MCF 10A (cell line): ENCODE measurements at regions of chr4 and their contacts with region 1.

Region 1: GRCh38 chr4:81040012-81040659 is 9.6 kb downstream of the BMP3 start:
- DNase-seq: peak; percentile 60
- H3K4me3 Mint-ChIP-seq: no peak overlapping the region
- H3K27ac Mint-ChIP-seq: no peak overlapping the region
- H3K4me1 Mint-ChIP-seq: peaks cover 27% of the 10 kb centered on the region
- H3K27me3 Mint-ChIP-seq: no peaks in the 10 kb centered on the region
- CTCF ChIP-seq: peak; percentile 82

Region 2: GRCh38 chr4:80360084-80360483 is 680.1 kb before region 1 on chr4:
- CTCF ChIA-PET with region 1: interaction called, 189 read pairs
- POLR2A ChIA-PET with region 1: interaction called, 4 read pairs
- intact Hi-C with region 1: loop called (anchors 1 kb)
- DNase-seq: no peak
- H3K4me3 Mint-ChIP-seq: no peak overlapping the region
- H3K27ac Mint-ChIP-seq: no peak overlapping the region
- H3K4me1 Mint-ChIP-seq: no peaks in the 10 kb centered on the region
- H3K27me3 Mint-ChIP-seq: peaks cover 23% of the 10 kb centered on the region
- CTCF ChIP-seq: no peak

Region 3: DNA sequence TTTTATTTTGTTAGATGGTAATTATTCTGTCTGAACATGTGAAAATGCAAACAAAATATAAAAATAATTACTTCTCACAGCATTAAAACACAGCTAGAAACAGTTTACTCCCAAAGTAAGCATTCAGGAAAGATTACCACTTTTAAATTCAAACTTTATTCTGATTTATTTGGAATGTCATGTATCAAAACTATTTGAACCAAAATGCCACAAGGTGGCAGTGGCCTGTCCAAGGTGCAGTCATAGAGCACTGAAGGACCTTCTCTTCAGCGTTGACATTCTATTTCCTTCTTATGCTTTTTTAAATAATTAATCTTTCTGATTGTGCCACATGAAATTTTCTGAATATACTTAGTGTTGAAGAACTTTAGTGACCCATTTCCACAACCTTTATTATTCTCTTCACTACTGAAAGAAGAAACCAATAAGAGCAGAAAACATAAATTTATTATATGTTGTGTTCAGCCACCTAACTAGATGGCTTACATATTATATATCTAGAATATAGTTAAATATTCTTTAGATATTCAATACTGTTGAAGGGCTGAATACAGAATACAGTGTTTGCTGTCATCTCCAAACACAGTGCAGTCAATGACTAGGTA is 421.0 kb before region 1 on chr4:
- CTCF ChIA-PET with region 1: interaction called, 9 read pairs
- POLR2A ChIA-PET with region 1: no interaction called
- intact Hi-C with region 1: loop called (anchors 1 kb)
- DNase-seq: peak; percentile 38
- H3K4me3 Mint-ChIP-seq: no peak overlapping the region
- H3K27ac Mint-ChIP-seq: no peak overlapping the region
- H3K4me1 Mint-ChIP-seq: no peaks in the 10 kb centered on the region
- H3K27me3 Mint-ChIP-seq: no peaks in the 10 kb centered on the region
- CTCF ChIP-seq: peak; percentile 40

Region 4: GRCh38 chr4:80989921-80990544 is 50.1 kb before region 1 on chr4:
- CTCF ChIA-PET with region 1: interaction called, 12 read pairs
- POLR2A ChIA-PET with region 1: no interaction called
- intact Hi-C with region 1: loop called (anchors 5 kb)
- DNase-seq: peak; percentile 70
- H3K4me3 Mint-ChIP-seq: no peak overlapping the region
- H3K27ac Mint-ChIP-seq: no peak overlapping the region
- H3K4me1 Mint-ChIP-seq: no peaks in the 10 kb centered on the region
- H3K27me3 Mint-ChIP-seq: no peaks in the 10 kb centered on the region
- CTCF ChIP-seq: peak; percentile 66

Region 5: GRCh38 chr4:81052119-81053068 is 12.3 kb after region 1 on chr4:
- CTCF ChIA-PET with region 1: interaction called, 66 read pairs
- POLR2A ChIA-PET with region 1: interaction called, 4 read pairs
- intact Hi-C with region 1: no loop called
- DNase-seq: peak; percentile 79
- H3K4me3 Mint-ChIP-seq: no peak overlapping the region
- H3K27ac Mint-ChIP-seq: no peak overlapping the region
- H3K4me1 Mint-ChIP-seq: no peaks in the 10 kb centered on the region
- H3K27me3 Mint-ChIP-seq: no peaks in the 10 kb centered on the region
- CTCF ChIP-seq: peak; percentile 59

Region 6: GRCh38 chr4:81946996-81947395 is 906.9 kb after region 1 on chr4:
- CTCF ChIA-PET with region 1: no interaction called
- POLR2A ChIA-PET with region 1: no interaction called
- intact Hi-C with region 1: no loop called
- DNase-seq: no peak
- H3K4me3 Mint-ChIP-seq: no peak overlapping the region
- H3K27ac Mint-ChIP-seq: no peak overlapping the region
- H3K4me1 Mint-ChIP-seq: no peaks in the 10 kb centered on the region
- H3K27me3 Mint-ChIP-seq: no peaks in the 10 kb centered on the region
- CTCF ChIP-seq: no peak